Aorta (tissue), 5 donors: ENCODE measurements at regions of chr9 and their contacts with region 1.

Region 1: DNA sequence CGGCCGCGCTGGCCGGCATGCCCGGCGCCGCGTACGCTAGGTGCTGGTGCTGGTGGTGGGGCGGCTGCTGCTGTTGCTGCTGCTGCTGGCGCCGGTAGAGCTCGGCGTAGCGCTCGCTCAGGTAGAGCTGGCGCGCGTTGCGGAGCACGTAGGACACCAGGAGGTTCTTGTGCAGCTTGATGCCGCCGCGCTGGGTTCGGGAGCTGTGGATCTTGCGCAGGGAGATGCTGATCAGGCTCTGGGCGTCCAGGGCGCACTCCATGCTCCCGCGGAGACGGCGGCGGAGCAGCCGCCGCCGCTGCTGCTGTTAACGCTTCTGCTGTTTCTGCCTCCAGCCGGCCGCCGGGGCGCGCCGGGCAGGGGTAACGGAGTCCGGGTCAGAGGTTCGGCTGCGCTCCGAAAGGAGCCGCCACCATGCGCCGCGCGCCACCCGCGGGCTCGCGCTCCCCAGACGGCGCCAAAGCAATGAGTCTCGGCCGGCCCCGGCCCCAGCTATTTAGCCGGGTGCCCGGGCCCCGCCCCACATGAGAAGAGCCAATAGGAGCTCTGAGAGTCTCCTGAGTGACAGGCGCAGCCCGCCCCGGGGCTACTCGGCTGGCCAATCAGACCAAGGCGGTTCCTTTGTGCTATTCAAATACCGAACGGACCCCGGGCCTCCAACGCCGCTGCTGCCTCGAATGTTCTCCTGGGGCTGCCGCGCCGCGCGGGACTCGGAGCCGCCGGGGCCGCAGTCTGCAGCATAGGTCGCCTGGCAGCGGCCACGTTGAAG is at the start of gene IER5L:
- DNase-seq: peak; percentile 97
- ATAC-seq: peak; percentile 87
- H3K4me3 ChIP-seq: peak within 1 kb of the TSS; percentile 67 to 97
- H3K27ac ChIP-seq: peak within 1 kb of the TSS; percentile 51 to 85
- H3K4me1 ChIP-seq: no peaks in the 10 kb centered on the region
- H3K27me3 ChIP-seq: peaks cover 0 to 2% of the 10 kb centered on the region in 2 donors
- total RNA-seq, gene IER5L: 28.3 to 66.9 TPM

Region 2: GRCh38 chr9:129242941-129243561 is 65.1 kb after region 1 on chr9:
- intact Hi-C with region 1: loop called in 1 of 2 experiments (anchors 10 kb)
- DNase-seq: peak; percentile 60 to 76
- ATAC-seq: peak; percentile 83
- H3K4me3 ChIP-seq: no peak overlapping the region
- H3K27ac ChIP-seq: no peak overlapping the region
- H3K4me1 ChIP-seq: no peaks in the 10 kb centered on the region
- H3K27me3 ChIP-seq: no peaks in the 10 kb centered on the region

Region 3: DNA sequence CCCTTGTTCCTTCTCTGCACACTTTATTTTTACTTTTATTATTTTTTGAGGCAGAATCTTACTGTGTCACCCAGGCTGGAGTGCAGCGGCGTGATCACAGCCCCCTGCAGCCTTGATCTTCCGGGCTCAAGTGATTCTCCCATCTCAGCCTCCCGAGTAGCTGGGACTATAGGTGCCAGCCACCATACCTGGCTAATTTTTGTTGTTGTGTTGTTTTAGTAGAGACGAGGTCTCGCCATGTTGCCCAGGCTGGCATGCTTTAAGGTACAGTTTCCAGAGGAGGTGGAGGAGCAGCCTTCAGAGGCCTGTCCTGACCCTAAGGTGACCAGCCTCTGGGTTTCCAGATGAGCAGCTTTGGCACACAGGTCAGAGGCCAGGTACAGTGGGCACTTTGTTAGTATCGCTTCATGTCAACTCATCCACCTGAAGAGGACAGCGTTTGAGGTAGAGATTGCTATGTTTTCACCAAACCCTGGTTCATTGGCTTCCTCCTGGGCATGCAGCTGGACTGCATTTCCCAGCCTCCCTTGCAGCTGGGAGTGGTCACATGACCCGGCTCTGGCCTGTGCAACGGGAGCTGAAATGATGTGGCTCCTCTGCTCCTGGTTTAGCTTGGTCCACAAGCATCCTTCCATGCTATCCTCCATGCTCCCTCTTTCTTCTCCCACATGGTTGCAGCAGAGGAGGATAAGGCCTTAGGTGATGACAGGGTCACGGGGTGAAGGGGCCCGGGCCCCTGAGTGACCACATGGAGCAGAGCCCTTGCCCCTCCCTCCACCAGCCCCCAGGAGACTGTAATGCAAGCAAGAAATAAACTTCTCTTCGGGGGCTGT is 139.4 kb after region 1 on chr9:
- intact Hi-C with region 1: loop called in 1 of 2 experiments (anchors 5 kb)
- DNase-seq: peak; percentile 75 to 78
- ATAC-seq: no peak
- H3K4me3 ChIP-seq: no peak overlapping the region
- H3K27ac ChIP-seq: peak overlapping the region in 1 of 2 donors; percentile 61
- H3K4me1 ChIP-seq: no peaks in the 10 kb centered on the region
- H3K27me3 ChIP-seq: no peaks in the 10 kb centered on the region

Region 4: GRCh38 chr9:129413537-129414376 is 235.8 kb after region 1 on chr9:
- intact Hi-C with region 1: loop called in 1 of 2 experiments (anchors 1 kb)
- DNase-seq: peak; percentile 100
- ATAC-seq: peak; percentile 94
- H3K4me3 ChIP-seq: peak overlapping the region; percentile 32 to 55
- H3K27ac ChIP-seq: peak overlapping the region; percentile 95 to 98
- H3K4me1 ChIP-seq: peaks cover 0 to 3% of the 10 kb centered on the region in 2 donors
- H3K27me3 ChIP-seq: no peaks in the 10 kb centered on the region

Region 5: GRCh38 chr9:129597355-129598088 is 419.5 kb after region 1 on chr9:
- intact Hi-C with region 1: no loop called
- DNase-seq: peak; percentile 81 to 89
- ATAC-seq: peak; percentile 83
- H3K4me3 ChIP-seq: peak overlapping the region in 1 of 2 donors; percentile 12
- H3K27ac ChIP-seq: peak overlapping the region in 1 of 2 donors; percentile 1
- H3K4me1 ChIP-seq: no peaks in the 10 kb centered on the region
- H3K27me3 ChIP-seq: no peaks in the 10 kb centered on the region

Region 6: DNA sequence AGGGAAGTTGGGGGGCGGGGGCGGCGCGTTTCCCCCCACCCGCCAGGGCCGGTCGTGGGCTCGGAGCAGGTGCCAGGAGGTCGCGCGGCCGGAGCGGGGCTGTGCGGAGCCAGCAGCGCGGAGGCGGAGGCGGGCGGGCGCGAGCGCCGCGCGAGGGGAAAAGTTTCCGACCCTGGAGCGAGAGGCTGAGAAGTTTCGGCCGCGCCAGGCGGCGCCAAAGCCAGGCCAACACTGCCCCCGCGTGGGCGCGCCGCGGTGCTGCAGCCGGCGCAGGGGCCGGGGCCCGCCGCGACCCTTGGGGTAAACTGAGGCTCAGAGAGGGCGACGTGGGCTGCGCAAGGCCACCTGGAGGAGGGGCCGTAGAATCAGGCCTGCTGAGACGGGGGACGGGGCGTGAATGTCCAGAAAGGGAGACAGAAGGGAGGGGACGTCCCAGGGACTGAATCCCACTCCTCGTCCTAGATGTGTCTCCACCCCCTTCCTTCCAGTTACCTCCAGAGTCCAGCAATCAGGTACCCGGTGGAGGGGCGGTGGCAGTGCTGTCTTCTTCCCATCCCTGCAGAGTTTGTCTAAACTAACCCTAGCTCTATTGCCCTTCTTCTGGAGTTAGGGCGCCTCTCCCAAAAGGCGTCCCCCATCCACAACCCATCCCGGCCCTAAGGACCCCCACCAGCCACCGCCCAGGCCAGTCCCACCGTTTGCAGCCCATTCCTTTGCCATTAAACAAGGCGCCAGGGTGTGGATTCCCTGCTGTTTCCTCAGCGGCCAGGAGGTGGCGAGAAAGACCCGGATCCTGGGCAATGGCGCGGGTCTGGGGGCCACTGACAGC is 432.7 kb after region 1 on chr9:
- intact Hi-C with region 1: loop called in 1 of 2 experiments (anchors 1 kb)
- DNase-seq: peak; percentile 87 to 94
- ATAC-seq: peak; percentile 73
- H3K4me3 ChIP-seq: peak overlapping the region; percentile 14 to 46
- H3K27ac ChIP-seq: peak overlapping the region in 1 of 2 donors; percentile 72
- H3K4me1 ChIP-seq: no peaks in the 10 kb centered on the region
- H3K27me3 ChIP-seq: no peaks in the 10 kb centered on the region